ENCODE measurements at regions of chr22 and their contacts with region 1.

Region 1: GRCh38 chr22:40950962-40951794 is at the start of gene RBX1:
- DNase-seq: peak; percentile 98
- H3K4me3 ChIP-seq: peak within 1 kb of the TSS; percentile 68 to 90 (median 87)
- H3K27ac ChIP-seq: peak within 1 kb of the TSS; percentile 95 to 97
- H3K4me1 ChIP-seq: peaks cover 0 to 9% of the 10 kb centered on the region in 2 donors
- H3K27me3 ChIP-seq: no peaks in the 10 kb centered on the region
- CTCF ChIP-seq: no peak
- POLR2A ChIP-seq: peak; percentile 77
- total RNA-seq, gene RBX1: 30.4 to 42.7 (median 39.3) TPM

Region 2: DNA sequence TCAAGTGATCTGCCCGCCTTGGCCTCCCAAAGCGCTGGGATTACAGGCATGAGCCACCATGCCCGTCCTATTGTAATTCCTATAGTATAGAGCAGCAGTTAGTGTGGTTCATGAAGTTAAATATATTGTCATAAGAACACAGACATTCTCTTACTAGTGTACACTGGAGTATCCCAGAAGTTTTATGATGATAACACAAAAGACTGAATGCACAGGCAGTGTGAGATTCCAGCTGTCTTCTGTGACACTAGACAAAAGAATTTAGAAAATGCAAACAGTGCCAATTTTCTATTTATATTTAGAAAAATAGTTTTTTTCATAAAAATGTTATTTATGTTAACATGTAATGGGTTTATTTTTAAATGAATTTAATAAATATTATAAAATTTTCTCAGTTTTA is 39.4 kb before region 1 on chr22:
- intact Hi-C with region 1: no loop called
- DNase-seq: no peak
- H3K4me3 ChIP-seq: no peak overlapping the region
- H3K27ac ChIP-seq: no peak overlapping the region
- H3K4me1 ChIP-seq: no peaks in the 10 kb centered on the region
- H3K27me3 ChIP-seq: no peaks in the 10 kb centered on the region
- CTCF ChIP-seq: no peak
- POLR2A ChIP-seq: no peak

Region 3: GRCh38 chr22:41091132-41092022 is 140.2 kb after region 1 on chr22:
- intact Hi-C with region 1: loop called (anchors 10 kb)
- DNase-seq: peak; percentile 99
- H3K4me3 ChIP-seq: peak overlapping the region; percentile 82 to 99 (median 94)
- H3K27ac ChIP-seq: peak overlapping the region; percentile 100
- H3K4me1 ChIP-seq: peaks cover 0 to 11% of the 10 kb centered on the region in 2 donors
- H3K27me3 ChIP-seq: no peaks in the 10 kb centered on the region
- CTCF ChIP-seq: no peak
- POLR2A ChIP-seq: peak; percentile 88

Measured in breast epithelium (tissue), 4 donors.